GM10248 (cell line): ENCODE measurements at regions of chr7 and their contacts with region 1.

Region 1: DNA sequence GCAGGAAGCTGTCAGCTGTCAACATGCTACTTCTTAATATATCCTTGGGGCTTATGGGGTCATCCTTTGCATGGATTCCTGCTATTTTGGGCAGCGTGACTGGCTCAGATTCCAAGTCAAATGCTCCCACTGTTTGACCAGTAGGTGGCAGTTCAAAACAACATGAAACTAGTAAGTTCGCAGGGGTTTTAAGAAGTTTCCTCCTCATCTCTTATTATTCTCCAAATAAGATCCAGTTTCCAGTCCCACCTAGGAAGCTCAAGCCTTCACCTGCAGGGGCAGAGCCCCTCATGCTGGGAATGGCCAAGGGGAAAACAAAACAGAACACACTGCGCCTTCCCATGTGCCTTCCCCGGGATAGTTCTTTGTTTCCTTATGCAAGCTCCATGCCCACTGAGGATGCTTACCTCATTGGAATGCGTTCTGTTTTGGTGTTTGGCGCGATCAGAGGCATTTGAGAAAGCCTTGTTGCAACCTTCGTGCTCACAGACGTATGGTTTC is 259.8 kb downstream of the GLI3 start:
- DNase-seq: no peak
- CTCF ChIP-seq: peak; percentile 49

Region 2: GRCh38 chr7:41967156-41967555 is 10.0 kb before region 1 on chr7:
- CTCF ChIA-PET with region 1: interaction called, 19 read pairs
- POLR2A ChIA-PET with region 1: no interaction called
- DNase-seq: no peak
- CTCF ChIP-seq: no peak

Region 3: GRCh38 chr7:42175834-42176723 is 198.9 kb after region 1 on chr7:
- CTCF ChIA-PET with region 1: no interaction called
- POLR2A ChIA-PET with region 1: no interaction called
- DNase-seq: no peak
- CTCF ChIP-seq: no peak

Region 4: DNA sequence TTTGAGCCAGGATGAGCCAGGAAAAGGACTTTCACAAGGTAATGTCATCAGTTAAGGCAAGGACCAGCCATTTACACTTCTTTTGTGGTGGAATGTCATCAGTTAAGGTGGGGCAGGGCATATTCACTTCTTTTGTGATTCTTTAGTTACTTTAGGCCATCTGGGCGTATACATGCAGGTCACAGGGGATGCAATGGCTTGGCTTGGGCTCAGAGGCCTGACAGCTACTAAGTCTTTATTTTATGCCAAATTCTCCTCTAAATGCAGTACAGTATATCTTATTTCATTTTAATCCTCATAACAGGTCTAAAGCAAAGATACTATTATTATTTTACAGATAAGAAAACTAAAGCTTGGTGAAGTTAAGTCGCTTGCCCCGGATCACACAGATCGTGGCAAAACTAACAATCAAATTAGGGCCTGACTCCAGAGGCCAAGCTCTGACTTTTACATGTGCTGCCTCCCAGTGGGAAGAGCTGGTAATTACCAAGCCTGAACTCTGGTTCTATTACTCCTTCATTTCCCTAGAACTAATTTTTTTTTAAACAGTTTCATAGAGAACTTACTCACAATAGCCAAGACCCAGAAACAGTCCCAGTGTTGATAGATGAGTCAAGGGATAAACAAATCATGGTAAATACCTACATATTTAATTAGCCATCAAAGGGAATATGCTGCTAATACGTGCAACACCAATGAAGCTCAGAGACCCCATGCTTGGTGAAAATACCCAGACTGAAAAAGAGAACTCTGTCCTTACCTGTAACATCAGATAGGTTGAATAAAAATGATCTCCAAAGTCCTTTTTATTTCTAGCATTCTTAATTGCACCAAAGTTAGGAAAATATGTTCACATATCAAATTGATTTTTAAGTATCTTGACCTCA is 899.2 kb after region 1 on chr7:
- CTCF ChIA-PET with region 1: interaction called, 34 read pairs
- POLR2A ChIA-PET with region 1: no interaction called
- DNase-seq: peak; percentile 60
- CTCF ChIP-seq: peak; percentile 90